ENCODE measurements at regions of chr9 and their contacts with region 1.

Region 1: GRCh38 chr9:113275157-113276131 is at the starts of genes CDC26 and PRPF4:
- DNase-seq: peak; percentile 93 to 95
- ATAC-seq: peak; percentile 97 to 98
- H3K4me3 ChIP-seq: peak within 1 kb of the TSS; percentile 63 to 89 (median 82)
- H3K27ac ChIP-seq: peak within 1 kb of the TSS; percentile 84 to 94 (median 93)
- H3K4me1 ChIP-seq: peaks cover 12 to 22% of the 10 kb centered on the region in 2 donors
- H3K27me3 ChIP-seq: no peaks in the 10 kb centered on the region
- CTCF ChIP-seq: no peak
- POLR2A ChIP-seq: peak; percentile 84 to 88
- total RNA-seq, gene CDC26: 16.7 to 34.0 (median 28.3) TPM
- total RNA-seq, gene PRPF4: 14.0 to 19.6 (median 16.4) TPM

Region 2: DNA sequence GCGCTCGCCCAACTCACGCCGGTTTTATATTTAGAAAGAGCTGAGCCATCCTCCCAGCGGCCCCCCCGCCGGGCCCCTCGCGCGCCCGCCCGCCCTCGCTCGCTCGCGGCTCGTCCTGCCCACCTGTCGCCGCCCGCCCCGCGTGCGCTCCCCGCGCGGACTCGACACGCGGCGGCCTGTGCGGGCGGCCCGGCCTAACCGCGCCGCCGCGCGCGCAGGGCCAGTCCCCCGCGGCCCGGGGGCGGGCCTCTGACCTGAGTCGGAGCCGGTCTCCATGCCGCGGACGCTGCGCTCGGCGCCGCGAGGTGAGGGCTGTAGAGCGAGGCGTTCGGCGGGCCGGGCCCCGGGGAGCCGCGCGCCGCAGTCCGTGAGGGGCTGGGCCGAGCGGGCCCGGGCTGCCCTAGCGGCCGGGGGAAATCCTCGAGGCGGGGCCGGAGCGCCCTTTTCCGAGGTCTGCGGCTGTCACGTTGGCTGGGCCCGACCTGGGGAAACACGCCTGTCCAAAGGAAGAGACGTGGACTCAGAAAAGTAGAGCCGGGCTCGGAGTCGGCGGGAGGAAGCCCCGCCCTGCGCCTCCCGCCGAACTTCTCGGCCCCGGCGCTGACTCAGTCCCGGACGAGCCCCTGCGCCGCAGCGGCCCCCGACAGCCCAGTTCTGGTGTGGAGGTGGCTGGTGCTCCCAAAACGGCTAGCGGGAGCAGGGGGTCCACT is 1791.4 kb before region 1 on chr9 and contains the start of gene ECPAS:
- in situ Hi-C with region 1: no loop called
- intact Hi-C with region 1: loop called (anchors 10 kb)
- DNase-seq: peak; percentile 65 to 85
- ATAC-seq: peak; percentile 51 to 63
- H3K4me3 ChIP-seq: peak within 1 kb of the TSS; percentile 81 to 94 (median 88)
- H3K27ac ChIP-seq: peak within 1 kb of the TSS; percentile 95 to 99 (median 98)
- H3K4me1 ChIP-seq: peaks cover 36 to 37% of the 10 kb centered on the region in 2 donors
- H3K27me3 ChIP-seq: no peaks in the 10 kb centered on the region
- CTCF ChIP-seq: peak in 4 of 5 experiments; percentile 9 to 36 (median 15)
- POLR2A ChIP-seq: peak; percentile 71 to 75
- total RNA-seq, gene ECPAS: 320 to 509 (median 424) TPM

Region 3: DNA sequence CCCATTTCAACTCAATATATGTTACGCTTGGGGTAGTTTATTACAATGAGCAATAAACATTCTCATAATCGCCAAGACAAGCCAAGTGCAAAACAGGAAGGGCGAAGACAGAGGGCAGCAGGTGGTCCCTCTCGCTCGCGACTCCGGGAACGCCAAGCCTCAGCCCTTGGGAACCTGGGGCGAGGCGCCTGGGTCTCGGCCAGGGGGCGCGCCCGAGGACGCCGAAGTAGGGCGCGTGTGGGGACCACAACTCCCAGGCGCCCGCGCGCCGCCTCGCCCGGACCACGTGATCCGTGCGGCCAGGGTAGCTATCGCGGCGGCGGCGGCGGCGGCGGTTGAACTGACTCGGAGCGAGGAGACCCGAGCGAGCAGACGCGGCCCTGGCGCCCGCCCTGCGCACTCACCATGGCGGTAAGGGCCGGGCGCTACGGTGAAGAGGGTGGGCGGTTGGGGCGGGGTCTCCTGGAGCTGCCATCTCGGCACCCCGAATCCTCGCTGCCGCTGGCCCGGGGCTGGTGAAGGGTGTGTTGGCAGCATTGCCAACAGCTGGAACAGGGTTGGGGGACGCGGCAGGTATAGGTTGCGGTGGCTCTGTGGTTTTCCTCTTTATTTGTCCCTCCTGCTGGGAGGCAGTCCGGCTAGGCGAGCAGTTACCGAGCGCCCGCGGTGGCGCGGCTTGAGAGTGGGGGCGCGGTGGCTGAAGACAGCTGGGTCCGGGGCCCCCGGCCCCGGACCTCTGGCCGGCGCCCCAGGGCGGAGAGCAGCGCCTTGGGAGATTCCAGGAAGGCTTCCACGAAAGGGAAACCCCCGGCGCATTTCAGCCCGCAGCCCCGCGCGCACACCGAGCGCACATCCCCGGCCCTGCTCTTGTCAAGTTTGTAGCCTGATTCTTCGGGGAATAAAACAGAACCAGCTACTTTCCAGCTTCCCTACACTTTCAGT is 124.5 kb before region 1 on chr9 and contains the start of gene SLC31A2:
- in situ Hi-C with region 1: no loop called
- intact Hi-C with region 1: loop called (anchors 2 kb)
- DNase-seq: peak; percentile 81 to 86
- ATAC-seq: peak; percentile 81 to 82
- H3K4me3 ChIP-seq: peak within 1 kb of the TSS; percentile 95 to 99 (median 96)
- H3K27ac ChIP-seq: peak within 1 kb of the TSS; percentile 84 to 94 (median 92)
- H3K4me1 ChIP-seq: peaks cover 18 to 42% of the 10 kb centered on the region in 2 donors
- H3K27me3 ChIP-seq: no peaks in the 10 kb centered on the region
- CTCF ChIP-seq: peak in 3 of 5 experiments; percentile 23 to 32 (median 28)
- POLR2A ChIP-seq: peak; percentile 70 to 80
- total RNA-seq, gene SLC31A2: 17.5 to 29.6 (median 23.9) TPM

Region 4: GRCh38 chr9:113178087-113178486 is 97.4 kb before region 1 on chr9:
- in situ Hi-C with region 1: no loop called
- intact Hi-C with region 1: no loop called
- DNase-seq: no peak
- ATAC-seq: no peak
- H3K4me3 ChIP-seq: no peak overlapping the region
- H3K27ac ChIP-seq: no peak overlapping the region
- H3K4me1 ChIP-seq: no peaks in the 10 kb centered on the region
- H3K27me3 ChIP-seq: no peaks in the 10 kb centered on the region
- CTCF ChIP-seq: no peak
- POLR2A ChIP-seq: no peak

Region 5: DNA sequence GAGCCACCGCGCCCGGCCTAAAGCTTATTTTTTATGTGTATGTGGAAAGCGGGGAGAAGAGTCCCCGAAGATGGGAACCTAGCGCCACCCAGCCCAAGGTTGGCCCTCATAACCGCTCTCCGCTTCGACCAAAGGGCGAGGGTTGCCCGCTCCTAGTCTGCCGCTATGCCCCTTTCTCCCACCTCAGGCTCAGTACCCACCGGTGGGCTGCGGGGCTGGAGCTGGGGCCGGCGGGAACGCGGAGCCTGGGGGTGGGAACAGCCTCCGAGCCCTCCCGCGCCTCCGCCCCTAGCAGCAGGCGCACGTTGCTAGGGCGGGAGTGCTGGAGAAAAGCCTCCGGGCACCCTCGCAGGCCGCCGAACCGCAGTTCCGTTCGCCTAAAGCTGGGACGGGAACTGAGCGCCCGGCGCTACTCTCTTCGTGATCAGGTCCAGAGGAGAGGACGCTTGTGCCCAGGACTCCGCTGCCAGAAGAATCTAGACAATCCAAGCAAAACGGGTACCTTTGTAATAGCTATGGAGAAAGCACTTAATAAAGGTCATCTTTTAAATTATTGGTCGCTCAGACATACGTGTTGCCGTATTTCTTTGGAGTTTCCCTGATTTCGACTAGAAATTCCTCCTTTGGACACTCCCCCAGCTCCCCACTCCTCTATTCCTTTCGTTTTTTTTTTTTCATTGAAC is 64.7 kb after region 1 on chr9 and contains the start of gene WDR31:
- in situ Hi-C with region 1: no loop called
- intact Hi-C with region 1: loop called (anchors 1 kb)
- DNase-seq: peak; percentile 68 to 76
- ATAC-seq: peak; percentile 95 to 97
- H3K4me3 ChIP-seq: peak within 1 kb of the TSS; percentile 67 to 96 (median 87)
- H3K27ac ChIP-seq: peak within 1 kb of the TSS; percentile 60 to 77 (median 70)
- H3K4me1 ChIP-seq: peaks cover 9 to 20% of the 10 kb centered on the region in 2 donors
- H3K27me3 ChIP-seq: no peaks in the 10 kb centered on the region
- CTCF ChIP-seq: no peak
- POLR2A ChIP-seq: peak in 1 of 2 donors; percentile 26
- total RNA-seq, gene WDR31: 0.29 to 1.1 (median 0.36) TPM in 3 of 4 donors, not detected in the other

Region 6: GRCh38 chr9:113410207-113410864 is 134.9 kb after region 1 on chr9 and contains the starts of genes C9orf43 and POLE3:
- in situ Hi-C with region 1: loop called in 3 of 4 experiments (anchors 5 to 10 kb)
- intact Hi-C with region 1: loop called (anchors 1 kb)
- DNase-seq: peak; percentile 90 to 91
- ATAC-seq: peak; percentile 96
- H3K4me3 ChIP-seq: peak within 1 kb of the TSS; percentile 67 to 98 (median 88)
- H3K27ac ChIP-seq: peak within 1 kb of the TSS; percentile 97 to 99 (median 98)
- H3K4me1 ChIP-seq: peaks cover 14 to 22% of the 10 kb centered on the region in 2 donors
- H3K27me3 ChIP-seq: no peaks in the 10 kb centered on the region
- CTCF ChIP-seq: peak in 2 of 5 experiments; percentile 43 to 71
- POLR2A ChIP-seq: peak; percentile 55 to 62
- total RNA-seq, gene C9orf43: not detected
- total RNA-seq, gene POLE3: 42.9 to 66.4 (median 57.8) TPM

Region 7: DNA sequence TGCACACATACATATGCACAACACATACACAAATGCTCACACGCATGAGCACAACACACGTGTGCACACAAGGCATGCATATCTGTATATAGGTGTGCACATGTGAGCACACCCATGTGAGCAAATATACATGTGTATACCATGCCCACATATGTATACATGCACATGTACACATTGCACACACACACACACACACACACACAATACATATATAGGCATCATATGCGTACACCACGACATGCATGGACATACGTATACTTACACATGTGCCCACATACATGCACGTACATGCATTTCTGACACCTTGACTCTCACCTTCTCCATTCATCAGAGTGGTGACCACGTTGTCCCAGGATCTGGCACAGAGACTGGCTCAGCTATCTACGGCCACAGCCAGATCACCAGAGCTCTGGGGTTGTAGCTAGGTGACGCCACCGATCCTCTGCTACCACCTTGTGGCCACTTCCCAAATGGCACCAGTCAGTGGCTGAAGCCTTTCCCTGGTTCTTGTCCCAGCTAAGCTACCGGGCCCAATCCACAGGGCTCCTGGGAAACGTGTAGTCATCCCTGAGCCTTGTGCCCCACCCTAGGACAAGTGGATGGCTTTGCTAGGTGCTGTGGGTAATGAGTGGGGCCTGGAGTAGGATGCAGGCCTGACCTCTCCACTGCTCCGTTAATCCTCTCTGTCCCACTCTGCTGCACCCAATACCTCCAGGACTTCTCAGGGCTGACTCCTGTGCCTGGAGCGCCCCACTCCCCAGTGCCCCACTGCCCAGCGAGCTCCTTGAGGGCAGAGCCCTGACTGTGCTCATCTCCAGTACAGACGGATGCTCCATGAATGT is 382.5 kb after region 1 on chr9:
- in situ Hi-C with region 1: loop called in 2 of 4 experiments (anchors 10 to 25 kb)
- intact Hi-C with region 1: loop called (anchors 2 kb)
- DNase-seq: peak; percentile 67 to 80
- ATAC-seq: peak; percentile 80 to 91
- H3K4me3 ChIP-seq: no peak overlapping the region
- H3K27ac ChIP-seq: no peak overlapping the region
- H3K4me1 ChIP-seq: peaks cover 10 to 21% of the 10 kb centered on the region in 2 donors
- H3K27me3 ChIP-seq: no peaks in the 10 kb centered on the region
- CTCF ChIP-seq: peak; percentile 93 to 98 (median 95)
- POLR2A ChIP-seq: no peak

Measured in gastrocnemius medialis (tissue), 4 donors.